H1 (cell line): ENCODE measurements at regions of chr22 and their contacts with region 1.

Region 1: GRCh38 chr22:19948057-19948760 is 6.6 kb upstream of the TXNRD2 start:
- DNase-seq: no peak
- H3K4me3 ChIP-seq: no peak overlapping the region
- H3K27ac ChIP-seq: no peak overlapping the region
- H3K4me1 ChIP-seq: peaks cover 0 to 1% (median under 1%) of the 10 kb centered on the region in 4 experiments; a peak in 3 of 7 replicates
- H3K27me3 ChIP-seq: no peaks in the 10 kb centered on the region; a peak in 1 of 7 replicates
- CTCF ChIP-seq: no peak
- EP300 ChIP-seq: no peak
- POLR2A ChIP-seq: no peak
- RAD21 ChIP-seq: no peak

Region 2: GRCh38 chr22:19745155-19746101 is 202.8 kb before region 1 on chr22:
- CTCF ChIA-PET with region 1: interaction called, 12 read pairs
- POLR2A ChIA-PET with region 1: no interaction called
- DNase-seq: no peak
- H3K4me3 ChIP-seq: no peak overlapping the region
- H3K27ac ChIP-seq: no peak overlapping the region
- H3K4me1 ChIP-seq: peaks cover 0 to 10% (median under 1%) of the 10 kb centered on the region in 4 experiments; a peak in 2 of 7 replicates
- H3K27me3 ChIP-seq: peaks cover 0 to 2% (median 0%) of the 10 kb centered on the region in 4 experiments; a peak in 4 of 7 replicates
- CTCF ChIP-seq: no peak
- EP300 ChIP-seq: no peak
- POLR2A ChIP-seq: no peak
- RAD21 ChIP-seq: no peak

Region 3: DNA sequence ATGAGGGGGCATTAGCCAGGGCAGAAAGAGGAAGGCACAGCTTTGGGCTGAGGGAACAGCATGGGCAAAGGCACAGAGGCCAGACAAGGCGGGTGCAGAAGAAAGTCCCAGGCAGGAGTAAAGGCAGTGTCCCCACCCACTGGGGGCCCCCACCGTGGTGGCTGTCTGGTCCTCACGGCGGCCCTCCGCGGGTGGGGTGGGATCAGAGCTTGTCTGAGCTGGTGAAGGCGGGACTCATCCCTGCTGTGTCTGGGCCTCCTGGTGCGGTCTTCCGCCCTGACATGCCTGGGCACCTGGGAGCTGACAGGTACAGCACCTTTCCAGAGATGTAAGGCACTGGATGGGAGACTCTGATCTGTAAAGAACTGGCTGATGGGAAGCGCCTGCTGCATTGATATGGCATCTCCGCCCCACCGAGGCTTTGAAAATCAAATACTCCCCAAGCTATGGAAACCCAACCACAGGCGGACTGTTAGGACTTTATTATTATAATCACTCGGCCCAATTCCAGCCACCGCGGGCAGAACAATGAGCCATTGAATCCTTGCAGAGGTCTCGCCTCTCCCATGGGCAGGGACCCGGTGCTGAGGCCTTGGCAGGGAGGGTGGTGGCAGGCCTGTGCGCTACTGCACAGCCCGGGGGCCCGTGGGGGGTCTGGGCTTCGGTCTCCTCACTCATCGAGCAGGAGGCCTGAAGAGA is 79.3 kb before region 1 on chr22:
- CTCF ChIA-PET with region 1: no interaction called
- POLR2A ChIA-PET with region 1: no interaction called
- DNase-seq: peak in 1 of 2 experiments; percentile 49
- H3K4me3 ChIP-seq: no peak overlapping the region
- H3K27ac ChIP-seq: no peak overlapping the region
- H3K4me1 ChIP-seq: peaks cover 0 to 7% (median 4%) of the 10 kb centered on the region in 4 experiments; a peak in 4 of 7 replicates
- H3K27me3 ChIP-seq: no peaks in the 10 kb centered on the region
- CTCF ChIP-seq: no peak
- EP300 ChIP-seq: no peak
- POLR2A ChIP-seq: no peak
- RAD21 ChIP-seq: no peak